Endothelial cell of umbilical vein (primary cell): ENCODE measurements at regions of chr14 and their contacts with region 1.

Region 1: GRCh38 chr14:49786315-49787110 is 18.6 kb downstream of the KLHDC2 start:
- DNase-seq: no peak
- H3K4me3 ChIP-seq: no peak overlapping the region
- H3K27ac ChIP-seq: no peak overlapping the region
- H3K4me1 ChIP-seq: no peaks in the 10 kb centered on the region
- H3K27me3 ChIP-seq: no peaks in the 10 kb centered on the region
- CTCF ChIP-seq: no peak
- POLR2A ChIP-seq: no peak

Region 2: DNA sequence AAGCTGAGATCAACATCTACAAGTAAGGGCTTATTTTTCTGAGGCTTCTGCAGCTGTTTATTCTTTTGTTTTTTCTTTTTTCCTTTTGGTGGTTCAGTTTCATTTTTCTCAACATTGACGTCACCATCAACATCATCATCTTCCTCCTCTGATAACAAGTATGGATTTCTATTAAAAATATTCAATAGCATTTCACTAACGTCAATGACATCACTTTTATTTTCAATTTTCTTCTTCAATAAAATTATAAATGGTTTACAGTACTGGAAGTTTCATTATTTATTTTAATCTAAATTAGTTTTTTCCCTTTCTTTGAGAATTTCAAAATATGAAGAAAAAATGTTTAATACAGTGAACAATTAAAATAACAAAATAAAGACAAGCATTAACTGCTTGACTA is 42.1 kb after region 1 on chr14:
- CTCF ChIA-PET with region 1: no interaction called
- POLR2A ChIA-PET with region 1: no interaction called
- dilution Hi-C with region 1: no loop called
- intact Hi-C with region 1: loop called (anchors 10 kb)
- DNase-seq: no peak
- H3K4me3 ChIP-seq: no peak overlapping the region
- H3K27ac ChIP-seq: no peak overlapping the region
- H3K4me1 ChIP-seq: no peaks in the 10 kb centered on the region
- H3K27me3 ChIP-seq: no peaks in the 10 kb centered on the region
- CTCF ChIP-seq: no peak
- POLR2A ChIP-seq: no peak

Region 3: DNA sequence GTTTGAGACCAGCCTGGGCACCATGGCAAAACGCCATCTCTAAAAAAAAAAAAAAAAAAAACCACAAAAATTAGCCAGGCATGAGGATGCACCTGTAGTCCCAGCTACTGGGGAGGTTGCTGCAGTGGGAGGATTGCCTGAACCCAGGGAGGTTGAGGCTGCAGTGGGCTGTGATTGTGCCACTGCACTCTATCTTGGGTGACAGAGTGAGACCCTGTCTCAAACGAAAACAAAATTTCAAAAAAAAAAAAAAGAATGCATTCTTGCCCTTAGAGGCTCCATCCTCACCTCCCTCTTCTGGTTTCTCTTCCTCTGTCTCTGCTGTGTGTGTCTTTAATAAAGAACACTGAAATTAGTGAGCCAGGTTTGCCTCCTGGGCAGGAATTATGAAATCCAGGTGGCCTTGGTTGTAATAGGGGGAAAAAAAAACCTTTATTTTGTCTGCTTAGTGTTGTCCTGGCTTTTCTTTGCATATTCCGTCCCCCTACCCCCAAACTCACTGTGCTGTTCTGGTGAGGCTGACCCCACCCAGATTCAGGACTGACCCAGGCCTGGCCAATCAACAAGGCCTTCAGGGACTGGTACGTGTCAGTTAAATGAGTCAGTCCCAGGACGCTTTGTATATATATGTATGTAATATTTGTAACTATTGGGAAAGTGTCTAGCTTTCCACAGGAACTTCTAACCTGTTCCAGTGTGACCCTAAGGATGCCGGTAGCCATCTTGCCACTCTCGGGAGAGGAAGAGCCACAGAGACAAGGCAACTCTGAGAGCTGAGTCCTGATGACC is 222.2 kb after region 1 on chr14:
- CTCF ChIA-PET with region 1: no interaction called
- POLR2A ChIA-PET with region 1: no interaction called
- dilution Hi-C with region 1: no loop called
- intact Hi-C with region 1: no loop called
- DNase-seq: no peak
- H3K4me3 ChIP-seq: no peak overlapping the region
- H3K27ac ChIP-seq: no peak overlapping the region
- H3K4me1 ChIP-seq: peaks cover 2% of the 10 kb centered on the region
- H3K27me3 ChIP-seq: peaks cover 0 to under 1% of the 10 kb centered on the region in 2 experiments
- CTCF ChIP-seq: no peak
- POLR2A ChIP-seq: no peak